ENCODE measurements at regions of chr9 and their contacts with region 1.

Region 1: GRCh38 chr9:21789541-21790037 is 12.8 kb upstream of the MTAP start:
- DNase-seq: peak in 32 of 35 experiments; percentile 12 to 89 (median 38)
- ATAC-seq: peak; percentile 91 to 99 (median 95)
- H3K4me3 ChIP-seq: peak overlapping the region in 1 of 2 donors; percentile 23
- H3K4me3 Mint-ChIP-seq: peak overlapping the region; percentile 35 to 74 (median 61)
- H3K27ac ChIP-seq: no peak overlapping the region
- H3K27ac Mint-ChIP-seq: peak overlapping the region; percentile 31 to 40
- H3K4me1 ChIP-seq: no peaks in the 10 kb centered on the region
- H3K4me1 Mint-ChIP-seq: peaks cover 0 to 4% (median 0%) of the 10 kb centered on the region in 3 donors
- H3K27me3 ChIP-seq: peaks cover 3 to 5% of the 10 kb centered on the region in 2 experiments
- H3K27me3 Mint-ChIP-seq: peaks cover 3 to 11% of the 10 kb centered on the region in 2 donors

Region 2: GRCh38 chr9:20754556-20754955 is 1035.0 kb before region 1 on chr9:
- CTCF ChIA-PET with region 1: no interaction called
- POLR2A ChIA-PET with region 1: no interaction called
- DNase-seq: no peak
- ATAC-seq: no peak
- H3K4me3 ChIP-seq: no peak overlapping the region
- H3K4me3 Mint-ChIP-seq: no peak overlapping the region
- H3K27ac ChIP-seq: no peak overlapping the region
- H3K27ac Mint-ChIP-seq: no peak overlapping the region
- H3K4me1 ChIP-seq: no peaks in the 10 kb centered on the region
- H3K4me1 Mint-ChIP-seq: no peaks in the 10 kb centered on the region
- H3K27me3 ChIP-seq: no peaks in the 10 kb centered on the region
- H3K27me3 Mint-ChIP-seq: no peaks in the 10 kb centered on the region

Region 3: GRCh38 chr9:21465859-21466518 is 323.6 kb before region 1 on chr9:
- CTCF ChIA-PET with region 1: interaction called, 15 to 45 read pairs
- POLR2A ChIA-PET with region 1: no interaction called
- DNase-seq: peak in 2 of 35 experiments; percentile 21 to 74
- ATAC-seq: peak in 3 of 4 experiments; percentile 53 to 73 (median 72)
- H3K4me3 ChIP-seq: no peak overlapping the region
- H3K4me3 Mint-ChIP-seq: no peak overlapping the region
- H3K27ac ChIP-seq: no peak overlapping the region
- H3K27ac Mint-ChIP-seq: no peak overlapping the region
- H3K4me1 ChIP-seq: no peaks in the 10 kb centered on the region
- H3K4me1 Mint-ChIP-seq: peaks cover 0 to 2% (median 0%) of the 10 kb centered on the region in 3 donors
- H3K27me3 ChIP-seq: peaks cover 0 to 6% of the 10 kb centered on the region in 2 experiments
- H3K27me3 Mint-ChIP-seq: peaks cover 4 to 9% of the 10 kb centered on the region in 2 donors

Region 4: DNA sequence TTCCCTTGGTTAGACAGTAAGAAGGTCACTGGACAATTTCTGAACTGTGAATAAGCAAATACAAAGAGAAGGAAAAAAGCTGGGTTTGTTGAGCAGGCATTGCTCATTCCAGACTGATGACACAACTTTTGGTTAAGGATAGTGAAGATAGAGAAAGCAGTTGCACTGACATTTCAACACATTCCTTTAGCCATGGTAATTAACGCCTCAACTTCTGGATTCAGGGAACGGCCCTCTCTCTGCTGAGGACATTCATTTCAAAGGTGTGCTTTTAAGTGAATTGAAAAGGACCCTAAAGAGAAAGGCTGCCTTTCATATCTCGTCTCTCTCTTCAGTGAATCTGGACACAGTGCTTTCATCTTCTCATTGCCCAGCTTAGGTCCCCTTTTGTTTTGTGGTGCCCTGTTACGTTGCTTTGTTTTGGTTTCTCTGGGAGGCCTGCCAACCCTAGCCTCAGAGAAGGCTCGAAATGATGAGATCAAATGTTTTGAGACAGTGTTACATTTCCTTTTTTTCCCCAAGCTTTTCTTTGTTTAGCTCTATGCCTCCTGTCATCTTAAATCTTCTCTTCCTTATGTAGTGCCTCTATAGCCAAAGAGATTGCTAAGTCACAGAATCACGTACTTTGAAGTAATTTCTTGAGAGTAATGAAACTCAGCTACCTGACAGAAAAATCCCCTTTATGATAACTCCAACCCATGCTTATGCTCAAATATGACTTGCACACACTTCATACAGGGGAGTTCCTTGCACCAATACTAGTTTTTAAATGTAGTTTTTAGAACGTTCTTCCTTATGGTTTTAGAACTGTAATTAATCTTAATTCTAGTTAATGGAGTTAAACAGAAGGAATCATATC is 213.0 kb before region 1 on chr9:
- CTCF ChIA-PET with region 1: no interaction called
- POLR2A ChIA-PET with region 1: no interaction called
- DNase-seq: peak in 28 of 35 experiments; percentile 15 to 65 (median 42)
- ATAC-seq: peak; percentile 69 to 88 (median 74)
- H3K4me3 ChIP-seq: no peak overlapping the region
- H3K4me3 Mint-ChIP-seq: peak overlapping the region; percentile 25 to 59 (median 37)
- H3K27ac ChIP-seq: peak overlapping the region; percentile 61
- H3K27ac Mint-ChIP-seq: peak overlapping the region; percentile 89
- H3K4me1 ChIP-seq: peaks cover 4 to 30% of the 10 kb centered on the region in 2 experiments
- H3K4me1 Mint-ChIP-seq: peaks cover 38 to 41% (median 39%) of the 10 kb centered on the region in 3 donors
- H3K27me3 ChIP-seq: no peaks in the 10 kb centered on the region
- H3K27me3 Mint-ChIP-seq: no peaks in the 10 kb centered on the region

Measured in T-cell (primary cell).